ENCODE measurements at regions of chr6 and their contacts with region 1.

Region 1: GRCh38 chr6:35797837-35798526 is 859 bp upstream of the CLPS start:
- DNase-seq: no peak
- H3K4me3 ChIP-seq: no peak overlapping the region
- H3K27ac ChIP-seq: no peak overlapping the region
- H3K4me1 ChIP-seq: no peaks in the 10 kb centered on the region
- H3K27me3 ChIP-seq: no peaks in the 10 kb centered on the region
- CTCF ChIP-seq: no peak

Region 2: DNA sequence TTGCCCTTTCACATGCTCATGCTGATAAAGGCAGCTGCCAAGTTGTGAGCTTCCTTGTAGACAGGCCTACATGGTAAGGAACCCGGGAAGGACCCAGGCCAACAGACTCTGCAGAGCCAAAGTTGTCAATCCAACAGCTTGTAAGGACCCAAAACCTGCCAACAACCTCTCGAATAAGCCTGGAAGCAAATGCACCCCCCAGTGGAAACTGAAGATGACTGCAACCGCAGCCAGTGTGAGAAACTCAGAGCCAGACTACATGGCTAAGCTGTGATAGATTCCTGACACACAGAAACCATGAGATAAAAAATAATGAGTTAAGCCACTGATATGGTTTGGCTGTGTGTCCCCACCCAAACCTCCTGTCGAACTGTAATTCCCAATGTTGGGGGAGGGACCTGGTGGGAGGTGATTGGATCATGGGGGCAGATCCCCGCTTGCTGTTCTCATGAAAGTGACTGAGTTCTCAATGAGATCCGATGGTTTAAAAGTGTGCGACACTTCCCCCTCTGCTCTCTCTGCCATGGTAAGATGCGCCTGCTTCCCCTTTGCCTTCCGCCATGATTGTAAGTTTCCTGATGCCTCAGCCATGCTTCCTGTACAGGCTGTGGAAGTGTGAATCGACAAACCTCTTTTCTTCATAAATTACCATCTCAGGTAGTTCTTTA is 40.4 kb before region 1 on chr6:
- CTCF ChIA-PET with region 1: no interaction called
- dilution Hi-C with region 1: loop called (anchors 5 kb)
- in situ Hi-C with region 1: no loop called
- intact Hi-C with region 1: no loop called
- DNase-seq: no peak
- H3K4me3 ChIP-seq: no peak overlapping the region
- H3K27ac ChIP-seq: no peak overlapping the region
- H3K4me1 ChIP-seq: no peaks in the 10 kb centered on the region
- H3K27me3 ChIP-seq: no peaks in the 10 kb centered on the region
- CTCF ChIP-seq: peak; percentile 35 to 48

Region 3: GRCh38 chr6:35857853-35858252 is 59.9 kb after region 1 on chr6:
- CTCF ChIA-PET with region 1: no interaction called
- dilution Hi-C with region 1: loop called (anchors 5 kb)
- in situ Hi-C with region 1: no loop called
- intact Hi-C with region 1: no loop called
- DNase-seq: no peak
- H3K4me3 ChIP-seq: no peak overlapping the region
- H3K27ac ChIP-seq: no peak overlapping the region
- H3K4me1 ChIP-seq: no peaks in the 10 kb centered on the region
- H3K27me3 ChIP-seq: no peaks in the 10 kb centered on the region
- CTCF ChIP-seq: no peak

Region 4: DNA sequence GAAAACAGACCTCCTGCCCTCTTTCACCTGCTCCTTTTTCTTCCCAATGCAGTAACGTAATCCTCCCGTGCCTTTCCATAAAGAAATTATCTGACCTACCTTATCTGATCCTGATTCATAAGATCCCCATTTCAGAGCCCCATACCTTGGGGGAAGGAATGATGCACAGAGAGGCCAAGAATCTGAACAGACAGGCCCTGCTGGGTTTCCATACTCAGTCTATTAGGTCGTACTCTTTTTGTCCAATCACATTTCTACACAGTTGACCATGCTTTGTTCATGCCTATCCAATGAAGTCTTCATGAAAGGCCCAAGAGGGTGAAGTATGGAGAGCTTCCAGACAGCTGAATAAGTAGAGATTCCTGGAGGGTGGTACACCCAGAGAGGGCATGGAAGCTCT is 97.6 kb after region 1 on chr6:
- CTCF ChIA-PET with region 1: no interaction called
- dilution Hi-C with region 1: loop called (anchors 5 kb)
- in situ Hi-C with region 1: no loop called
- intact Hi-C with region 1: no loop called
- DNase-seq: peak; percentile 49
- H3K4me3 ChIP-seq: no peak overlapping the region
- H3K27ac ChIP-seq: no peak overlapping the region
- H3K4me1 ChIP-seq: peaks cover 6% of the 10 kb centered on the region
- H3K27me3 ChIP-seq: no peaks in the 10 kb centered on the region
- CTCF ChIP-seq: no peak

Region 5: GRCh38 chr6:36897609-36898008 is 1099.6 kb after region 1 on chr6:
- CTCF ChIA-PET with region 1: no interaction called
- dilution Hi-C with region 1: no loop called
- in situ Hi-C with region 1: no loop called
- intact Hi-C with region 1: no loop called
- DNase-seq: peak; percentile 18
- H3K4me3 ChIP-seq: no peak overlapping the region
- H3K27ac ChIP-seq: no peak overlapping the region
- H3K4me1 ChIP-seq: peaks cover 9% of the 10 kb centered on the region
- H3K27me3 ChIP-seq: no peaks in the 10 kb centered on the region
- CTCF ChIP-seq: peak; percentile 15 to 24